PC-9 (cell line): ENCODE measurements at regions of chr19 and their contacts with region 1.

Region 1: GRCh38 chr19:40750059-40750873 is at the start of gene ACTMAP:
- DNase-seq: peak; percentile 98 to 99
- H3K4me3 ChIP-seq: peak within 1 kb of the TSS; percentile 95
- H3K27ac ChIP-seq: peak within 1 kb of the TSS; percentile 91
- H3K4me1 ChIP-seq: peaks cover 44% of the 10 kb centered on the region
- H3K27me3 ChIP-seq: no peaks in the 10 kb centered on the region
- CTCF ChIP-seq: no peak
- total RNA-seq, gene ACTMAP: 35.9 and 39.3 TPM in 2 replicates

Region 2: DNA sequence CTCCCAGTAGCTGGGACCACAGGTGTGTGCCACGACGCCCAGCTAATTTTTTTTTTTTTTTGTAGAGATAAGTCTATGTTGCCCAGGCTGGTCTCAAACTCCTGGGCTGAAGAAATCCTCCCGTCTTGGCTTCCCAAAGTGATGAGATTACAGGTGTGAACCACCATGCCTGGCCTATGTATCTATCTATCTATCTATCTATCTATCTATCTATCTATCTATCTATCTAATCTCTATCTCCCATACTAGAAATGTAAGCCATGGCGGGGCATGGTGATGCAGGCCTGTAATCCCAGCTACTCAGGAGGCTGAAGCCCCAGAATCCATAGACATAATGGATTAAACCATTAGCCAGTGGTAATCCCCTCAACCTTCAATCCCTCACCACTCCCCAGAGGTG is 299.6 kb before region 1 on chr19:
- CTCF ChIA-PET with region 1: interaction called, 16 read pairs
- POLR2A ChIA-PET with region 1: no interaction called
- intact Hi-C with region 1: no loop called
- DNase-seq: no peak
- H3K4me3 ChIP-seq: no peak overlapping the region
- H3K27ac ChIP-seq: no peak overlapping the region
- H3K4me1 ChIP-seq: no peaks in the 10 kb centered on the region
- H3K27me3 ChIP-seq: no peaks in the 10 kb centered on the region
- CTCF ChIP-seq: no peak

Region 3: GRCh38 chr19:40716655-40717324 is 33.5 kb before region 1 on chr19 and contains the starts of genes COQ8B and ITPKC:
- CTCF ChIA-PET with region 1: no interaction called
- POLR2A ChIA-PET with region 1: interaction called, 11 read pairs
- intact Hi-C with region 1: loop called (anchors 1 kb)
- DNase-seq: peak; percentile 94 to 99
- H3K4me3 ChIP-seq: peak within 1 kb of the TSS; percentile 75
- H3K27ac ChIP-seq: peak within 1 kb of the TSS; percentile 99
- H3K4me1 ChIP-seq: peaks cover 27% of the 10 kb centered on the region
- H3K27me3 ChIP-seq: no peaks in the 10 kb centered on the region
- CTCF ChIP-seq: no peak
- total RNA-seq, gene COQ8B: 57.7 and 66.6 TPM in 2 replicates
- total RNA-seq, gene ITPKC: 17.6 and 22.1 TPM in 2 replicates

Region 4: DNA sequence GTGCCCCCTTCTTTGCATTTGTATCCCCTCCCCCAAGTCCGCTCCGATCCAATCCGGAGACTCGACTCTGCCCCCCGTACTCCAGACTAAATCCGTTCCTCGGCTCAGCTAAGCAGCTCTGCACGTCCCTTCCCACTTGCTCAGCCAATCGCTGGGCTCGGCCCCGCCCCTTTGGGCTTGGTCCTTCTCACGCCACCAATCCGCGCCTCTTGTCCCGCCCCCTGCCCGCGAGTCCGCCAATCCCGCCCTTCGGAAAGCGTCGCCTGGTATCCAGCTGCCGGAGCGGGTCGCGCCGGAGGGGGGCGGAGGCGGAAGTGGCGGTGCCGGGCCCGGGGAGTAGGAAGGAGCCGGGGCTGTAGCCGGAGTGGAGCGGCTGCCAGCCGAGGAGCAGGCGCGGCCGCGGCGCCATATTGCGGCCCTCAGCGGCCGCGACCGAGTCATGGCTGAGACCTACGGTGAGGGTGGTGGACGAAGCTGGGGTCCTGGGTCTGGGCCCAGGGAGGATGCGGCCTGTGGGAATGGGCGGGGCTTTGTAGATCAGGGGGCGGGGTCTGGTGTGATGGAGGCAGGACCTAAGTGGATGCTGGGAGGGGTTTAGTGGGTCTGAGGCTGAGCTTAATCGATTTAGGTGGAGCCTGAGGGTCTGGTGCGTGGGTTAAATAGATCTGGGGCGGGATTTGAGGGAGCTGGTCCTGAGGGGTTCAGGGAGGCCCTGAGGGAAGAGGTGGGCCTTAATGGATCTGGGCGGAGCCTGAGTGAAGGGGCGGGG is 27.9 kb after region 1 on chr19 and contains the start of gene RAB4B:
- CTCF ChIA-PET with region 1: no interaction called
- POLR2A ChIA-PET with region 1: interaction called, 22 read pairs
- intact Hi-C with region 1: loop called (anchors 2 kb)
- DNase-seq: peak; percentile 97 to 100
- H3K4me3 ChIP-seq: peak within 1 kb of the TSS; percentile 64
- H3K27ac ChIP-seq: peak within 1 kb of the TSS; percentile 95
- H3K4me1 ChIP-seq: peaks cover 13% of the 10 kb centered on the region
- H3K27me3 ChIP-seq: no peaks in the 10 kb centered on the region
- CTCF ChIP-seq: no peak
- total RNA-seq, gene RAB4B: 22.2 and 24.8 TPM in 2 replicates

Region 5: GRCh38 chr19:40806488-40807468 is 56.5 kb after region 1 on chr19:
- CTCF ChIA-PET with region 1: interaction called, 4 read pairs
- POLR2A ChIA-PET with region 1: interaction called, 6 read pairs
- intact Hi-C with region 1: loop called (anchors 5 kb)
- DNase-seq: no peak
- H3K4me3 ChIP-seq: no peak overlapping the region
- H3K27ac ChIP-seq: no peak overlapping the region
- H3K4me1 ChIP-seq: peaks cover 20% of the 10 kb centered on the region; the same call in 1 of the 2 replicates
- H3K27me3 ChIP-seq: no peaks in the 10 kb centered on the region
- CTCF ChIP-seq: no peak

Region 6: GRCh38 chr19:41934849-41935374 is 1184.6 kb after region 1 on chr19:
- CTCF ChIA-PET with region 1: no interaction called
- POLR2A ChIA-PET with region 1: interaction called, 15 read pairs
- intact Hi-C with region 1: no loop called
- DNase-seq: peak in 1 of 2 experiments; percentile 69
- H3K4me3 ChIP-seq: no peak overlapping the region
- H3K27ac ChIP-seq: no peak overlapping the region
- H3K4me1 ChIP-seq: no peaks in the 10 kb centered on the region
- H3K27me3 ChIP-seq: peaks cover 44% of the 10 kb centered on the region
- CTCF ChIP-seq: peak; percentile 94